MCF 10A (cell line): ENCODE measurements at regions of chr1 and their contacts with region 1.

Region 1: GRCh38 chr1:110068646-110069403 is 1.6 kb downstream of the ALX3 start:
- DNase-seq: no peak
- H3K4me3 Mint-ChIP-seq: no peak overlapping the region
- H3K27ac Mint-ChIP-seq: no peak overlapping the region
- H3K4me1 Mint-ChIP-seq: no peaks in the 10 kb centered on the region
- H3K27me3 Mint-ChIP-seq: no peaks in the 10 kb centered on the region
- CTCF ChIP-seq: no peak

Region 2: DNA sequence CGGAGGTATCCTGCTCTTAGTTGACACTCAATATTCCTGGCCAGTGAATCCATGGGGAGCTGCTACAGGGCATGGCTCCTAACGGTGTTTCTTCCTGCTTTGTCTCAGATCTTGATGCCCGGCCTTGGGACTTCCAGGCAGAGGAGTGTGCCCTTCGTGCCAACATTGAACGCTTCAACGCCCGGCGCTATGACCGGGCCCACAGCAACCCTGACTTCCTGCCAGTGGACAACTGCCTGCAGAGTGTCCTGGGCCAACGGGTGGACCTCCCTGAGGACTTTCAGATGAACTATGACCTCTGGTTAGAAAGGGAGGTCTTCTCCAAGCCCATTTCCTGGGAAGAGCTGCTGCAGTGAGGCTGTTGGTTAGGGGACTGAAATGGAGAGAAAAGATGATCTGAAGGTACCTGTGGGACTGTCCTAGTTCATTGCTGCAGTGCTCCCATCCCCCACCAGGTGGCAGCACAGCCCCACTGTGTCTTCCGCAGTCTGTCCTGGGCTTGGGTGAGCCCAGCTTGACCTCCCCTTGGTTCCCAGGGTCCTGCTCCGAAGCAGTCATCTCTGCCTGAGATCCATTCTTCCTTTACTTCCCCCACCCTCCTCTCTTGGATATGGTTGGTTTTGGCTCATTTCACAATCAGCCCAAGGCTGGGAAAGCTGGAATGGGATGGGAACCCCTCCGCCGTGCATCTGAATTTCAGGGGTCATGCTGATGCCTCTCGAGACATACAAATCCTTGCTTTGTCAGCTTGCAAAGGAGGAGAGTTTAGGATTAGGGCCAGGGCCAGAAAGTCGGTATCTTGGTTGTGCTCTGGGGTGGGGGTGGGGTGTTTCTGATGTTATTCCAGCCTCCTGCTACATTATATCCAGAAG is 15.0 kb before region 1 on chr1:
- CTCF ChIA-PET with region 1: interaction called, 47 read pairs
- POLR2A ChIA-PET with region 1: no interaction called
- intact Hi-C with region 1: no loop called
- DNase-seq: peak; percentile 57
- H3K4me3 Mint-ChIP-seq: no peak overlapping the region
- H3K27ac Mint-ChIP-seq: peak overlapping the region; percentile 12
- H3K4me1 Mint-ChIP-seq: peaks cover 2% of the 10 kb centered on the region
- H3K27me3 Mint-ChIP-seq: no peaks in the 10 kb centered on the region
- CTCF ChIP-seq: peak; percentile 87